Activated B cell treated with CpG ODN at 0.5 μM for 24 hours (primary cell): ENCODE measurements at regions of chr11 and their contacts with region 1.

Region 1: GRCh38 chr11:60363542-60364510 is 14.5 kb upstream of the MS4A7 start:
- DNase-seq: peak; percentile 42
- ATAC-seq: peak; percentile 81
- H3K4me3 Mint-ChIP-seq: peak overlapping the region; percentile 83
- H3K27ac Mint-ChIP-seq: peak overlapping the region; percentile 93
- H3K4me1 Mint-ChIP-seq: peaks cover 80% of the 10 kb centered on the region
- H3K27me3 Mint-ChIP-seq: no peaks in the 10 kb centered on the region
- CTCF ChIP-seq: no peak

Region 2: GRCh38 chr11:60235321-60235720 is 128.5 kb before region 1 on chr11:
- CTCF ChIA-PET with region 1: no interaction called
- POLR2A ChIA-PET with region 1: no interaction called
- intact Hi-C with region 1: no loop called
- DNase-seq: no peak
- ATAC-seq: no peak
- H3K4me3 Mint-ChIP-seq: no peak overlapping the region
- H3K27ac Mint-ChIP-seq: no peak overlapping the region
- H3K4me1 Mint-ChIP-seq: no peaks in the 10 kb centered on the region
- H3K27me3 Mint-ChIP-seq: peaks cover 6% of the 10 kb centered on the region
- CTCF ChIP-seq: no peak

Region 3: DNA sequence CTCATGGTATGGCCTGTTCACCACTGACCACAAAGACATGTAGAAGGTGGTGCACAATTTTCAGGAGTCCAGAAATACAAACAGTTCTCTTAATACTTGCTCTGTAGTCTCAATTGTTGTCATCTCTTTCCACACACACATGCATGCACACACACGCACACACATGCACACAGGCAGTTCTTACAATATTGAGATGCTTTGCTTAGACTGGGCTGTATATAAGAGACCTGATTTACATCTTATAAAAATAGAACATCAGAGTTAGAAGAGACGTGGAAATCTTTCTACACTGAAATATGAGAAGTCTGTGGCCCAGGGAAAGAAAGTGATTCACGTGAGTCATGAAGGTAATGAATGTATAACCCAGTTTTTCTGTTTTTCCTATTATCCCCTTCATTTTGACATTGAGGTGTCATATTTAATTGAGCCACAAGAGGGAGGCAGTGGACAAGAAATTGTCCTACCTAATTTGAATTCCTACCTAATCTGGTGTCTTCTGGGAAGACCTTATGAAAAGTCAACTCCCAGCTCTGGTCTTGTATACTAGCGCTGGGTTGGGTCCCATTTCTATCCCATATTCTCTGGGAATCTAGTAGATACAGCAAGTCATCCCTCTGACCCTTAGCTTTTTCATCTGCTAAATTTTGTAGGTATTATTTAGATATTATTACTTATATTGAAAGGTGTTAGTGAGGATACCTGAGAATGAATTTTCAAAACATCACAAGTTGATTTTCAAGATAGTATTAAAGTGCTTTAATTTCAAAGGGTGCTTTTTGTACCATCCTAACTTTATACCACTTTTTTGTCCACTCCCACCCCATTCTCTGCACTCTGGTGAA is 98.2 kb before region 1 on chr11:
- CTCF ChIA-PET with region 1: interaction called, 25 read pairs
- POLR2A ChIA-PET with region 1: interaction called, 5 read pairs
- intact Hi-C with region 1: no loop called
- DNase-seq: no peak
- ATAC-seq: peak; percentile 76
- H3K4me3 Mint-ChIP-seq: no peak overlapping the region
- H3K27ac Mint-ChIP-seq: no peak overlapping the region
- H3K4me1 Mint-ChIP-seq: peaks cover 11% of the 10 kb centered on the region
- H3K27me3 Mint-ChIP-seq: no peaks in the 10 kb centered on the region
- CTCF ChIP-seq: peak; percentile 65

Region 4: GRCh38 chr11:60345489-60345888 is 18.3 kb before region 1 on chr11:
- CTCF ChIA-PET with region 1: interaction called, 42 read pairs
- POLR2A ChIA-PET with region 1: interaction called, 6 read pairs
- intact Hi-C with region 1: no loop called
- DNase-seq: no peak
- ATAC-seq: peak; percentile 56
- H3K4me3 Mint-ChIP-seq: no peak overlapping the region
- H3K27ac Mint-ChIP-seq: no peak overlapping the region
- H3K4me1 Mint-ChIP-seq: peaks cover 35% of the 10 kb centered on the region
- H3K27me3 Mint-ChIP-seq: no peaks in the 10 kb centered on the region
- CTCF ChIP-seq: no peak

Region 5: DNA sequence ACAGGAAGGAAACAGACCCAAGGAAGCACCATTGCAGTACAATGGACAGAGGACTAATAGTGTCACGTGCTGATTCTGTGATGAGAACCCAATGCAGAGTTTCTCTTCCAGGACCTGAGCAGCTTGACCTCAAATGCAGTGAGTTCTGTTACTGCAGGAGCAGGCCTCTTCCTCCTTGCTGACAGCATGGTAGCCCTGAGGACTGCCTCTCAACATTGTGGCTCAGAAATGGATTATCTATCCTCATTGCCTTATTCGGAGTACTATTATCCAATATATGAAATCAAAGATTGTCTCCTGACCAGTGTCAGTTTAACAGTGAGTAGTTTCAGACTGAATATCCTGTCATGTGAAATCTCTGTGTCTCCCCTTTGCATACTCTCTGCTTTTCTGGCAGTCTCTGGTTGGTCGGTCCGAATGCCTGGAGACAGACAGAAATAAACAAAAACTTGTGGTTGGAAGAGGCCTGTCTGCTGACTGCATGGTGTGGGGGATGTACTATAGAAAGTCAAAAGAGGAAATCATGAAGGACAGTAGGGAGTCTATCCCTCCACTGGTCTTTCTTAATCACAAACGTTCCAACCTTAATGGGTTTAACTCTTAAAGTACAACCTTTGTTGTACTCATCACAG is 25.6 kb after region 1 on chr11:
- CTCF ChIA-PET with region 1: interaction called, 6 read pairs
- POLR2A ChIA-PET with region 1: interaction called, 12 read pairs
- intact Hi-C with region 1: loop called (anchors 1 kb)
- DNase-seq: no peak
- ATAC-seq: peak; percentile 92
- H3K4me3 Mint-ChIP-seq: peak overlapping the region; percentile 58
- H3K27ac Mint-ChIP-seq: peak overlapping the region; percentile 88
- H3K4me1 Mint-ChIP-seq: peaks cover 49% of the 10 kb centered on the region
- H3K27me3 Mint-ChIP-seq: no peaks in the 10 kb centered on the region
- CTCF ChIP-seq: no peak

Region 6: GRCh38 chr11:60469723-60470122 is 105.9 kb after region 1 on chr11:
- CTCF ChIA-PET with region 1: interaction called, 11 read pairs
- POLR2A ChIA-PET with region 1: interaction called, 76 read pairs
- intact Hi-C with region 1: no loop called
- DNase-seq: no peak
- ATAC-seq: no peak
- H3K4me3 Mint-ChIP-seq: no peak overlapping the region
- H3K27ac Mint-ChIP-seq: peak overlapping the region; percentile 37
- H3K4me1 Mint-ChIP-seq: peaks cover 71% of the 10 kb centered on the region
- H3K27me3 Mint-ChIP-seq: no peaks in the 10 kb centered on the region
- CTCF ChIP-seq: no peak

Region 7: DNA sequence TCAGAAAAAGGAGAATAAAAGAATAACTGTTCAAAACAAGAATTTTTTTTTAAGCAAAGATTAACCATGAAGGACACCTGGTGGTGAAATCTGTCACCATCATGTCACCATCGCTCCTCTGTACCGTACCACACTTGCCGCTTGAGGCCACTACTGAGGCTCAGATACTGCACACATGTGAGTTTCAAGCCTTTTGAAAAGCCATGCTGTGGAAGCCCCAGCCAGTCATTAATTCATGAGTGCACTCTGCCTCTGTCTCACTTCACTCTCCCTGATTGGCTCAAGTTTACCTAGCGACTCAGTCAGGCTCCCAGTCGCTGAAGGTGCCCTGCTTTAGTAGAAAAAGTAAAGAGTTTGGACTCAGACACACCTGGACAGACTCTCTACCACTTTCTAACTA is 122.2 kb after region 1 on chr11:
- CTCF ChIA-PET with region 1: interaction called, 80 read pairs
- POLR2A ChIA-PET with region 1: interaction called, 82 read pairs
- intact Hi-C with region 1: loop called (anchors 1 kb)
- DNase-seq: peak; percentile 40
- ATAC-seq: peak; percentile 95
- H3K4me3 Mint-ChIP-seq: peak overlapping the region; percentile 42
- H3K27ac Mint-ChIP-seq: peak overlapping the region; percentile 63
- H3K4me1 Mint-ChIP-seq: peaks cover 55% of the 10 kb centered on the region
- H3K27me3 Mint-ChIP-seq: no peaks in the 10 kb centered on the region
- CTCF ChIP-seq: peak; percentile 44

Region 8: GRCh38 chr11:60625262-60625661 is 261.4 kb after region 1 on chr11:
- CTCF ChIA-PET with region 1: interaction called, 44 read pairs
- POLR2A ChIA-PET with region 1: interaction called, 4 read pairs
- intact Hi-C with region 1: no loop called
- DNase-seq: no peak
- ATAC-seq: peak; percentile 47
- H3K4me3 Mint-ChIP-seq: no peak overlapping the region
- H3K27ac Mint-ChIP-seq: no peak overlapping the region
- H3K4me1 Mint-ChIP-seq: peaks cover 14% of the 10 kb centered on the region
- H3K27me3 Mint-ChIP-seq: no peaks in the 10 kb centered on the region
- CTCF ChIP-seq: no peak

Region 9: GRCh38 chr11:60710482-60710881 is 346.7 kb after region 1 on chr11:
- CTCF ChIA-PET with region 1: no interaction called
- POLR2A ChIA-PET with region 1: no interaction called
- intact Hi-C with region 1: no loop called
- DNase-seq: no peak
- ATAC-seq: no peak
- H3K4me3 Mint-ChIP-seq: no peak overlapping the region
- H3K27ac Mint-ChIP-seq: no peak overlapping the region
- H3K4me1 Mint-ChIP-seq: no peaks in the 10 kb centered on the region
- H3K27me3 Mint-ChIP-seq: peaks cover 14% of the 10 kb centered on the region
- CTCF ChIP-seq: no peak